CD8-positive, alpha-beta T cell (primary cell): ENCODE measurements at regions of chr12 and their contacts with region 1.

Region 1: GRCh38 chr12:6708960-6709394 is 8.4 kb upstream of the PIANP start:
- DNase-seq: peak in 6 of 9 experiments; percentile 8 to 60 (median 46)
- ATAC-seq: peak; percentile 52
- H3K4me3 ChIP-seq: peak overlapping the region; percentile 36 to 46
- H3K4me3 Mint-ChIP-seq: peak overlapping the region; percentile 86
- H3K27ac ChIP-seq: peak overlapping the region; percentile 24 to 31
- H3K27ac Mint-ChIP-seq: peak overlapping the region; percentile 92
- H3K4me1 ChIP-seq: no peaks in the 10 kb centered on the region
- H3K4me1 Mint-ChIP-seq: peaks cover 8% of the 10 kb centered on the region
- H3K27me3 ChIP-seq: peaks cover 0 to 12% of the 10 kb centered on the region in 2 experiments
- H3K27me3 Mint-ChIP-seq: peaks cover 17% of the 10 kb centered on the region
- CTCF ChIP-seq: no peak

Region 2: DNA sequence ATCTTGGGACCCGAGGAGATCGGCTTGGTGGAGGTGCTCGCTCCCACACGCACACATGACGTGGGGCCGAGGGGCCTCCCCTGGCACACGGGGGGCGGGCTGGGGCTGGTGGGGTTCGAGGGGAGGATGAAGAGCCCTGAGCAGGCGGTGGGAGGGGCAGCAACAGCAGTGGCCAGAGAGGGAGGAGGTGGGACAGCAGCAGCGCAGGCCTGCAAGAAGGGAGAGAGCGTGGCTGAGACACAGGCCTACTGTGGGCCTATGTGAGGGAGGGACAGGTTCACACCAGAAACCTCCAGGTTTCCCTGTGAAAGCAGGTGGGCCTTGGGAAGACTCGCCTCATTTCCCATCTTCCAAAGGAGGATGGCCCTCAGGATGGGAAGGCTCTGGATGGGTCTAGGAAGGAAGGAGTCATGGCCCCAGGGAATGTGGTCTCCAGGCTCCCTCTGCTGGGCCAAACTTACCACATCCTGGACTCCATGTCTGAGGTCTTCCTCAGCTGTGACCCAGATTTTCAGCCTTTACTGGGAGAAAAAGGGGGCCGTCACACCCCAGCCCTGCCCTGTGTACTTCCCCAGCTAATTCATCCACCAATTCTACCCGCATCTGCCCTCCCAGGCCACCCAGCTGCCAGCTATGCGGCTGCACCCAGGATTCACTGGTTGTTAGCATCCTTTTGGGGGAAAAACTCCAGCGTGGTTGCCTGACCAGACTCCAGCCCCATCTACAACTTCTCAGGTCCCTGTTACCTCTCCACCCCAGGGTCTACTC is 11.2 kb before region 1 on chr12:
- CTCF ChIA-PET with region 1: no interaction called
- POLR2A ChIA-PET with region 1: no interaction called
- intact Hi-C with region 1: loop called in 1 of 2 experiments (anchors 1 kb)
- DNase-seq: peak in 3 of 9 experiments; percentile 20 to 54 (median 41)
- ATAC-seq: no peak
- H3K4me3 ChIP-seq: no peak overlapping the region
- H3K4me3 Mint-ChIP-seq: no peak overlapping the region
- H3K27ac ChIP-seq: no peak overlapping the region
- H3K27ac Mint-ChIP-seq: no peak overlapping the region
- H3K4me1 ChIP-seq: peaks cover 14% of the 10 kb centered on the region
- H3K4me1 Mint-ChIP-seq: peaks cover 18% of the 10 kb centered on the region
- H3K27me3 ChIP-seq: peaks cover 16 to 24% of the 10 kb centered on the region in 2 experiments
- H3K27me3 Mint-ChIP-seq: peaks cover 31% of the 10 kb centered on the region
- CTCF ChIP-seq: no peak

Region 3: GRCh38 chr12:6723607-6724396 is 14.8 kb after region 1 on chr12 and contains the start of gene COPS7A:
- CTCF ChIA-PET with region 1: interaction called, 3 read pairs
- POLR2A ChIA-PET with region 1: interaction called, 13 read pairs
- intact Hi-C with region 1: no loop called
- DNase-seq: peak; percentile 83 to 98 (median 97)
- ATAC-seq: peak; percentile 85
- H3K4me3 ChIP-seq: peak within 1 kb of the TSS; percentile 59 to 68
- H3K4me3 Mint-ChIP-seq: peak within 1 kb of the TSS; percentile 83
- H3K27ac ChIP-seq: peak within 1 kb of the TSS; percentile 67 to 92
- H3K27ac Mint-ChIP-seq: peak within 1 kb of the TSS; percentile 94
- H3K4me1 ChIP-seq: peaks cover 19% of the 10 kb centered on the region
- H3K4me1 Mint-ChIP-seq: peaks cover 27% of the 10 kb centered on the region
- H3K27me3 ChIP-seq: no peaks in the 10 kb centered on the region
- H3K27me3 Mint-ChIP-seq: no peaks in the 10 kb centered on the region
- CTCF ChIP-seq: peak; percentile 28
- total RNA-seq, gene COPS7A: 11.0 to 11.1 TPM